ENCODE measurements at regions of chr14 and their contacts with region 1.

Region 1: DNA sequence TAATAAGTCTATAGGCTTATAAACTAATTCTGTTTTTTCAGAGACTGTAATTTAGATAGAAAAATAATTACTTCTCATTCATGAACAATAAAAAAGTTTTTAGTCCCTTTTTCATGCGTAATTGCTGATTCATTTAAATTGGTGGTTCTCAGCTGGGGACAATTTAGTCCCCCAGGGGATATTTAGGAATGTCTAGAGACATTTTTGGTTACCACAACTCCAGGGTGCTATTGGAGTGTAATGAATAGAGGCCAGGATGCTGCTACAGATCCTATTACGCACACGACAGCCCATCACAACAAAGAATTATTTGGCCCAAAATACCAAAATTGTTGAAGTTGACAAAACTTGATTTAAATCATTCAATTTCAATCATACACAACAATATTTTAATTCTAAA is 22.8 kb upstream of the VCPKMT start:
- DNase-seq: no peak
- H3K4me3 ChIP-seq: no peak overlapping the region
- H3K27ac ChIP-seq: no peak overlapping the region
- H3K4me1 ChIP-seq: no peaks in the 10 kb centered on the region
- H3K27me3 ChIP-seq: no peaks in the 10 kb centered on the region
- CTCF ChIP-seq: no peak

Region 2: GRCh38 chr14:48967419-48967818 is 1171.8 kb before region 1 on chr14:
- CTCF ChIA-PET with region 1: no interaction called
- POLR2A ChIA-PET with region 1: interaction called, 10 read pairs
- intact Hi-C with region 1: no loop called
- DNase-seq: no peak
- H3K4me3 ChIP-seq: no peak overlapping the region
- H3K27ac ChIP-seq: no peak overlapping the region
- H3K4me1 ChIP-seq: no peaks in the 10 kb centered on the region
- H3K27me3 ChIP-seq: no peaks in the 10 kb centered on the region
- CTCF ChIP-seq: no peak

Region 3: DNA sequence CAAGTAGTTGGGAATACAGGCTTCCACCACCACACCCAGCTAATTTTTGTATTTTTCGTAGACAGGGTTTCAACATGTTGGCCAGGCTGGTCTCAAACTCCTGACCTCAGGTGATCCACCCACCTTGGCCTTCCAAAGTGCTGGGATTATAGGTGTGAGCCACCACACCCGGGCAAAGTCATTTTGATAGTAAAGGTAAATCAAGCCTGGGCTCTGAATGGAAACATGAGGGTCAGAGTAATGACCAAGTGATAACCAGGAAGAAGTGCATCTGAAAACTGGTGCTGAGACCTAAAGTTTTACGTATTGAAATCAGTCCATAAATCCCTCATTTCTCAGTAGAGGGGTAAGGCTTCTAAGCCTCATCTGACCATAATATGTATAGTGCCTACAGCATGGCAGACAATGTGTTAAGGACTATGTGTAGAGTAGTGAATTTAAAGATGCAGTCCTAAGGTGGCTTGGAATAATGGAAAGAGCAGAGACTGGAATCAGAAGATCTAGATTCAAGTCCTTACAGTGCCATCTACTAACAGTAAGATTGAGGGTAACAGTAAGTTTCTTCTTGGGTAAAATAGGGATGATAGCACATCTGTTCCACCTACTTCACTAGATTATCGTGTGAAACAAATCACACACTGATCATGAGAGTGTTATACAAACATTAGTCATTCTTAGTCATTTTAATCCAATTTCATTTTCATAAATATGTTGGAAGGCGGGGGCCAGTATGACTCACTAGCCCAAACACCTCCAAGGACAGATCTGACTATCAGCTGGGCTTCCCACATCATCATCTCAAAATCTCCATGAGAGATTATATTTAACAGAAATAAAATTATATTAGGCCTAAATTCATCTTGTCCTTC is 382.0 kb after region 1 on chr14:
- CTCF ChIA-PET with region 1: no interaction called
- POLR2A ChIA-PET with region 1: interaction called, 15 read pairs
- intact Hi-C with region 1: no loop called
- DNase-seq: peak; percentile 36 to 85
- H3K4me3 ChIP-seq: no peak overlapping the region
- H3K27ac ChIP-seq: peak overlapping the region; percentile 79
- H3K4me1 ChIP-seq: peaks cover 28% of the 10 kb centered on the region
- H3K27me3 ChIP-seq: no peaks in the 10 kb centered on the region
- CTCF ChIP-seq: no peak

Region 4: GRCh38 chr14:50631408-50631821 is 492.2 kb after region 1 on chr14:
- CTCF ChIA-PET with region 1: no interaction called
- POLR2A ChIA-PET with region 1: interaction called, 15 read pairs
- intact Hi-C with region 1: no loop called
- DNase-seq: no peak
- H3K4me3 ChIP-seq: no peak overlapping the region
- H3K27ac ChIP-seq: no peak overlapping the region
- H3K4me1 ChIP-seq: no peaks in the 10 kb centered on the region
- H3K27me3 ChIP-seq: no peaks in the 10 kb centered on the region
- CTCF ChIP-seq: no peak

Region 5: GRCh38 chr14:50785457-50786063 is 646.4 kb after region 1 on chr14:
- CTCF ChIA-PET with region 1: no interaction called
- POLR2A ChIA-PET with region 1: no interaction called
- intact Hi-C with region 1: no loop called
- DNase-seq: no peak
- H3K4me3 ChIP-seq: no peak overlapping the region
- H3K27ac ChIP-seq: no peak overlapping the region
- H3K4me1 ChIP-seq: no peaks in the 10 kb centered on the region
- H3K27me3 ChIP-seq: no peaks in the 10 kb centered on the region
- CTCF ChIP-seq: no peak

Measured in PC-9 (cell line).